ENCODE measurements at regions of chr4 and their contacts with region 1.

Region 1: DNA sequence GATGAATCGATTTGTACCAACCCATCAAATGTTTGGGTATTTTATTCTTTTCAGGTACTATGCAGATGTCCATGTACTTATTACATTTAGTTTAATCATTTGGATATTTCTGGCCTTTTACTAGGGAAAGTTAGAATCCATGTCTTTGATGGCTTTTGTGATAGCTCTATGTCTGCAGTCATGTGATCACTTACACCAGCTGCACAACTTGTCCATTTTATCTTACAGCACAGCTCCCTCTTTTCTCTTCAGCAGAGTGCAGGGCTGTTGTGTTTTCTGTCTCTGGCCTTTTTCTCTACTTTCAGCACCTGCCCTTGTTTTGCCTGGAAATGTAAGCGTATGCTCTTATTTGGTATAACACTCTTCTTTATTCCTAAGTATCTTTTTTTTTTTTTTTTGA is 30.6 kb downstream of the WWC2 start:
- DNase-seq: no peak
- H3K4me3 ChIP-seq: no peak overlapping the region
- H3K27ac ChIP-seq: peak overlapping the region in 1 of 4 donors; percentile 24
- H3K4me1 ChIP-seq: peaks cover 0 to 7% (median 5%) of the 10 kb centered on the region in 4 donors
- H3K27me3 ChIP-seq: no peaks in the 10 kb centered on the region
- CTCF ChIP-seq: no peak
- EP300 ChIP-seq: no peak
- POLR2A ChIP-seq: no peak

Region 2: GRCh38 chr4:182764137-182764536 is 365.5 kb before region 1 on chr4:
- in situ Hi-C with region 1: no loop called
- intact Hi-C with region 1: loop called (anchors 5 kb)
- DNase-seq: no peak
- H3K4me3 ChIP-seq: no peak overlapping the region
- H3K27ac ChIP-seq: no peak overlapping the region
- H3K4me1 ChIP-seq: no peaks in the 10 kb centered on the region
- H3K27me3 ChIP-seq: no peaks in the 10 kb centered on the region
- CTCF ChIP-seq: no peak
- EP300 ChIP-seq: no peak
- POLR2A ChIP-seq: no peak

Region 3: GRCh38 chr4:183011213-183011907 is 118.3 kb before region 1 on chr4:
- in situ Hi-C with region 1: no loop called
- intact Hi-C with region 1: no loop called
- DNase-seq: no peak
- H3K4me3 ChIP-seq: no peak overlapping the region
- H3K27ac ChIP-seq: no peak overlapping the region
- H3K4me1 ChIP-seq: no peaks in the 10 kb centered on the region
- H3K27me3 ChIP-seq: peaks cover 27% of the 10 kb centered on the region
- CTCF ChIP-seq: no peak
- EP300 ChIP-seq: no peak
- POLR2A ChIP-seq: no peak

Region 4: DNA sequence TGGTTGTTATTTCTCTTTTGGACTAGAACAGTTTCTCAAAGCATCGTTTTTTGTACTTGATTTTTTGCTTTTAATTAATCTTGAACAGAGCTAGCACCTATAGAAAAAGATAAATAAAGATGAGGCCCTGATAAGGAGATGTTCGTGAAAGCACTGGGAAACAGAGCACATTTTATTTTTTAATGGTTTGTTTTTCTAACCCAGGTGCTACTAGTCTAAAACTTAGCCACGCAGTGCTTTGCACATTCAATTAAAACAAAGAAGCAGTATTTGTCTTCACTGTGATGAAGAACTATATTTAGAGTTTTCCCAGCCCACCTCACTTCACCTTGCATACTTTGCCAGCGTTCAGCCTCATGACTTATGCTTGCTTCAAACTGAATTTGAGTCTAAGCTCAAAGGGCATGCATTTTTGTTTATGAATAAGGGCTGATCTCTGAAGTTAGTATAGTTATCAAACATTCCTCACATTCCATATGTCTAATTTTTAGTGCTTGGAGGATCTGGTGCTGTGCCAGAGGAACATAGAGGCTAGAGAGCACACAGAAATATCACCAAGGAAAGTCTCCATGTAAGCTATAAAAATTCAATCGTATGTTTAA is 46.1 kb after region 1 on chr4:
- in situ Hi-C with region 1: no loop called
- intact Hi-C with region 1: loop called (anchors 10 kb)
- DNase-seq: no peak
- H3K4me3 ChIP-seq: no peak overlapping the region
- H3K27ac ChIP-seq: no peak overlapping the region
- H3K4me1 ChIP-seq: peaks cover 0 to 21% (median 4%) of the 10 kb centered on the region in 4 donors
- H3K27me3 ChIP-seq: no peaks in the 10 kb centered on the region
- CTCF ChIP-seq: no peak
- EP300 ChIP-seq: no peak
- POLR2A ChIP-seq: no peak

Measured in transverse colon (tissue), 4 donors.